Breast epithelium (tissue), 4 donors: ENCODE measurements at regions of chr20 and their contacts with region 1.

Region 1: GRCh38 chr20:15772826-15773225 is 800.4 kb downstream of the KIF16B start:
- DNase-seq: no peak
- H3K4me3 ChIP-seq: no peak overlapping the region
- H3K27ac ChIP-seq: no peak overlapping the region
- H3K4me1 ChIP-seq: no peaks in the 10 kb centered on the region
- H3K27me3 ChIP-seq: no peaks in the 10 kb centered on the region
- CTCF ChIP-seq: no peak
- POLR2A ChIP-seq: no peak

Region 2: DNA sequence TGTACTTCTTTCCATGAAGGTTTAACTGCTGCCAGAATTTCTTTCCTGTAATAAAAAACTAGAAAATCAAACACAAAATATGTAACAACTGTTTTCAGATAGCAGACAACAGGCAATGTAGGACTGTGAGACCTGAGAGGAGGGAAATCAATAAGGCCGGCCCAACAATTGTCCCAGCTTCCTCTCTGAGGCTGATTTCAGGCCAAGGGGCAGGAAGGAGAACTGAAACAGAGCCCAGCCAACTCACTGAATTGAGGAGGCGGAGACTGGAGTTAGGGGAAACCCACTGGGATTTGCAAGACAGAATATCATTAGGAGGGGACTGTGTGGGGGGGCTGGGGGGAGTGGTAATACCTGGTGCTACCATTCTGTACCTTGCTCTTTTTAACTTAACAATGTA is 1477.6 kb before region 1 on chr20:
- intact Hi-C with region 1: loop called (anchors 5 kb)
- DNase-seq: no peak
- H3K4me3 ChIP-seq: no peak overlapping the region
- H3K27ac ChIP-seq: no peak overlapping the region
- H3K4me1 ChIP-seq: no peaks in the 10 kb centered on the region
- H3K27me3 ChIP-seq: no peaks in the 10 kb centered on the region
- CTCF ChIP-seq: no peak
- POLR2A ChIP-seq: no peak

Region 3: DNA sequence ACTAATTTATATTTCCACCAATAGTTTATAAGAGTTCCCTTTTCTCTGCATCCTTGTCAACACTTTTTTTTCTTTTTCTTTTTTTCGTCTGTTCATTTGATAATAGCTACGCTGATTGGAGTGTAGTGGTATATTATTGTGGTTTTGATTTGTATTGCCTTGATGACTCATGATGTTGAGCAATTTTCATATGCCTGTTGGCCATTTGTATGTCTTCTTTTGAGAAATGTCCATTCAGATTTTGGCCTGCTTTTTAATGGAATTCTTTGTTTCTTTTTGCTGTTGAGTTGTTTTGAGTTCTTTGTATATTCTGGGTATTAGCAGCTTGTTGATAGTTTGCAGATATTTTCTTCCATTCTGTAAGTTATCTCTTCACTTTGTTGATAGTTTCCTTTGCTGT is 27.0 kb after region 1 on chr20:
- intact Hi-C with region 1: no loop called
- DNase-seq: no peak
- H3K4me3 ChIP-seq: no peak overlapping the region
- H3K27ac ChIP-seq: no peak overlapping the region
- H3K4me1 ChIP-seq: no peaks in the 10 kb centered on the region
- H3K27me3 ChIP-seq: no peaks in the 10 kb centered on the region
- CTCF ChIP-seq: no peak
- POLR2A ChIP-seq: no peak